ENCODE measurements at regions of chr3 and their contacts with region 1.

Region 1: GRCh38 chr3:188446014-188446413 is 292.1 kb downstream of the LPP start:
- DNase-seq: no peak

Region 2: GRCh38 chr3:188489639-188490405 is 43.8 kb after region 1 on chr3:
- intact Hi-C with region 1: loop called in 1 of 2 experiments (anchors 1 kb)
- DNase-seq: no peak